Lower lobe of right lung (tissue), 2 donors: ENCODE measurements at regions of chr3 and their contacts with region 1.

Region 1: GRCh38 chr3:87350364-87351199 is 74.2 kb upstream of the POU1F1 start:
- DNase-seq: no peak
- ATAC-seq: peak; percentile 77 to 94
- H3K4me3 ChIP-seq: no peak overlapping the region
- H3K27ac ChIP-seq: no peak overlapping the region
- H3K4me1 ChIP-seq: no peaks in the 10 kb centered on the region
- H3K27me3 ChIP-seq: no peaks in the 10 kb centered on the region
- CTCF ChIP-seq: peak; percentile 92

Region 2: DNA sequence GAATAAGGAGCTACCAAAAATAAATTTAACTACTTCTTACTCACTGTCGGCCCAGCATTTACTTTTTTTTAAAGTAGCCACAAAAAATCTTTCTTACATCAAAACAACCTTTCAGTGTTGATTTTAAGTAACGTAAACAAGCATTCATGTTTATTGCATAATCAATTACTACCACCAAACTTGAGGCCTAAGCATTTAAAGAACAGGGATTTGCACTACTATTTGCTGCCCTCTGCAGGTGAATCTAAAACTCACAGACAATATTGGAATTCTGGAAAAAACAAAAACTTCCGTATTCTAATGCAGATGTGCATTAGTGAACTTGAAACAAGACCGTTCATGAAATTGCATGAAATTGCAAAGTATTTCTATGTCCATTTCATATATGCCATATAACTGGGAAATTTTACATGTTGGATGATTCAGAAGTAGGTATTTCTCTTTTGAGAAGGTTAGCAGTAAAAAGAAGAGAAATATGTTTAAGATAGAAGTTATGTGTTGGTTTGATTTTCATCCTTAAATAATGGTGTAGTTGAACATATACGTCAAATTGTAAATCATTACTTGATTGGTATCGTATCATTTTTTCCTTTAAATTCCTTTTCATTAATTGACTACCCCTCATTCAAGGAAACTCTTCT is 652.7 kb after region 1 on chr3:
- intact Hi-C with region 1: loop called (anchors 10 kb)
- DNase-seq: no peak
- ATAC-seq: peak; percentile 61 to 65
- H3K4me3 ChIP-seq: no peak overlapping the region
- H3K27ac ChIP-seq: no peak overlapping the region
- H3K4me1 ChIP-seq: no peaks in the 10 kb centered on the region
- H3K27me3 ChIP-seq: no peaks in the 10 kb centered on the region
- CTCF ChIP-seq: peak; percentile 64